B cell (primary cell): ENCODE measurements at regions of chr1 and their contacts with region 1.

Region 1: DNA sequence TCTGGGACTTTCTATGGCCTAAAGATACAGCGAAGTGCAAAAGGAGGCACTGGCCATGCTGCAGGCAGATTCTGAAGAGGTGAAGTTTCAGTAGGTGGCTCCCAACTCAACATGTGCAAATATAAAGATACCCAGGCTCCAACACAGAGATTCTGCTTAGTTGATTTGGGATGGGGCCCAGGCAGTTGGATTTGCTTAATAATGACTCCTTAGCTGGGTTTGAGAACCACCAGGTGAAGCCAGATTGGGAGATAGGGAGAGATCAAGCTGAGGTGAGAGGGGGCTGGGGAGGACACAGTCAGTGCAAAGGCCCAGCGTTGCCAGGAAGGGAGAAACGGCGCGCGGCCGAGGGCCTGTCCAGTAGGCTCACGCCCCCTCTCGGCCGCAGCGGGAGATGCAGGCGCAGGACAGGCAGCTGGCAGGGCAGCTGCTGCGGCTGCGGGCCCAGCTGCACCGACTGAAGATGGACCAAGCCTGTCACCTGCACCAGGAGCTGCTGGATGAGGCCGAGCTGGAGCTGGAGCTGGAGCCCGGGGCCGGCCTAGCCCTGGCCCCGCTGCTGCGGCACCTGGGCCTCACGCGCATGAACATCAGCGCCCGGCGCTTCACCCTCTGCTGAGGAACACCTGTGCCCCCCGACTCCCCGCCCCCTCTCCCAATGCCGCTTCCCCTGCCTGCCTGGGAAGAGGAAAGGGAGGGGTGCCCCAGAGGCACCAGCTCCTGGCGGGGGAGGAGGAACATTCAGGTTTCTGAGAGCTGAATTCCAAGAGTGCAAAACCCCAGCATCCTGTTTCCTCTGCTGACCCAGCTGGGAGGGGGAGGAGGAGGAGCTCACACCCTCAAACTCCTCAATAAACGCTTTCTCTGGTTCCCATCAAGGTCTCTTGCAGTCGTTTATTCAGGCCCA is 1.2 kb downstream of the FAM167B start:
- DNase-seq: peak; percentile 77
- ATAC-seq: peak; percentile 11
- H3K4me3 ChIP-seq: peak overlapping the region in 3 of 5 experiments; percentile 7 to 56 (median 29)
- H3K4me3 Mint-ChIP-seq: peak overlapping the region; percentile 68
- H3K27ac ChIP-seq: peak overlapping the region; percentile 94 to 95
- H3K27ac Mint-ChIP-seq: peak overlapping the region; percentile 84
- H3K4me1 ChIP-seq: peaks cover 72 to 73% of the 10 kb centered on the region in 2 donors
- H3K4me1 Mint-ChIP-seq: peaks cover 64% of the 10 kb centered on the region
- H3K27me3 ChIP-seq: no peaks in the 10 kb centered on the region
- H3K27me3 Mint-ChIP-seq: no peaks in the 10 kb centered on the region
- CTCF ChIP-seq: peak; percentile 90

Region 2: DNA sequence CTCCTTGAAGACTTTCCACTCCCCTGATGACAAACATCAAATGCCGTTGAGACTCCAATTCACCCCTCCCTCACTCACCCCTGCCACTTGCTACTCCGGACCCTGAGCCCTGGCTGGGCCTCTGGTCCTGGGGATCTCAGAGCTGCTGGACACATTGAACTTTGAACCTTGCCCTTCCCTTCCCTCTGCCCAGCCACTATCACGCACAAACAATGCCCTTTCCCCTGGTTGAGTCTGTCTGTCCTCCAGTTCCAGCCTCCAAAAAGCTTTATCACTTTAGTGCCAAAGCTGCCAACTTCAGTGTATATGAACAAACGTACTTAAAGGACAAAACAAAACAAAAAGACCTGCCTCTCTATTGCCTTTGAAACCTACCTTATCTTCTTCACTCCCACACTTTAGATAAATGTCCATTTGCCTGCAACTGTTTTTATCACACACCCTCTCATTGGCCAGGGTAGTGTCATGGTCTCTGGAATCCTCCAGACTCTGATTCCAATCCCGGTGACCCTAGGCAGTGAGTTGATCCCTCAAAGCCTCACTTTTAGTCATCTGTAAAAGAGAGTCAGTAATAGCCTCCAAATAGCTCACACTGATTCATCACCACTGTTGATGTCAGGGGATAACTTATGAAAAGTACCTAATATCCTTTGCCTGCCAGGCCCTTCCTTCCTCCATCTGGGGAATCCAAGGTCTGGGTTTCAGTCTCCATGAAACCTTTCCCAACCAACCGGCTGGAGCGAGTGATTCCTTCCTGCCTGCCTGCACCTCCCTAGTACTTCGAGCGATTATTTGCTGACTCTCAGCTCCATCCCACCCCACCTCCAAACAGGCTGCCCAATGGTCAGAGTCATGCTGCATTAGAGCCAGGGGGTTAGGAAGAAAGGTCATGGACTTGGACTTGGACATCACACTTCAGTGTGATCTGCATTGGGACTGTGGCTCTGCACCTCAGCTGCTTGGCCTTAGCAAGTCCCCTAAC is 416.5 kb before region 1 on chr1:
- CTCF ChIA-PET with region 1: no interaction called
- POLR2A ChIA-PET with region 1: no interaction called
- intact Hi-C with region 1: no loop called
- DNase-seq: no peak
- ATAC-seq: no peak
- H3K4me3 ChIP-seq: no peak overlapping the region
- H3K4me3 Mint-ChIP-seq: no peak overlapping the region
- H3K27ac ChIP-seq: no peak overlapping the region
- H3K27ac Mint-ChIP-seq: no peak overlapping the region
- H3K4me1 ChIP-seq: peaks cover 16 to 22% of the 10 kb centered on the region in 2 donors
- H3K4me1 Mint-ChIP-seq: peaks cover 16% of the 10 kb centered on the region
- H3K27me3 ChIP-seq: no peaks in the 10 kb centered on the region
- H3K27me3 Mint-ChIP-seq: no peaks in the 10 kb centered on the region
- CTCF ChIP-seq: no peak

Region 3: GRCh38 chr1:32179443-32180185 is 68.6 kb before region 1 on chr1 and contains the start of gene TXLNA:
- CTCF ChIA-PET with region 1: interaction called, 6 read pairs
- POLR2A ChIA-PET with region 1: interaction called, 3 read pairs
- intact Hi-C with region 1: loop called (anchors 2 kb)
- DNase-seq: peak; percentile 94
- ATAC-seq: peak; percentile 90
- H3K4me3 ChIP-seq: peak within 1 kb of the TSS; percentile 71 to 92 (median 76)
- H3K4me3 Mint-ChIP-seq: peak within 1 kb of the TSS; percentile 96
- H3K27ac ChIP-seq: peak within 1 kb of the TSS; percentile 76 to 90
- H3K27ac Mint-ChIP-seq: peak within 1 kb of the TSS; percentile 99
- H3K4me1 ChIP-seq: peaks cover 21 to 31% of the 10 kb centered on the region in 2 donors
- H3K4me1 Mint-ChIP-seq: peaks cover 35% of the 10 kb centered on the region
- H3K27me3 ChIP-seq: no peaks in the 10 kb centered on the region
- H3K27me3 Mint-ChIP-seq: no peaks in the 10 kb centered on the region
- CTCF ChIP-seq: no peak
- total RNA-seq, gene TXLNA: 38.3 and 38.4 TPM in 2 replicates

Region 4: GRCh38 chr1:32266921-32267591 is 18.8 kb after region 1 on chr1:
- CTCF ChIA-PET with region 1: interaction called, 44 read pairs
- POLR2A ChIA-PET with region 1: interaction called, 5 read pairs
- intact Hi-C with region 1: loop called (anchors 2 kb)
- DNase-seq: no peak
- ATAC-seq: no peak
- H3K4me3 ChIP-seq: no peak overlapping the region
- H3K4me3 Mint-ChIP-seq: no peak overlapping the region
- H3K27ac ChIP-seq: no peak overlapping the region
- H3K27ac Mint-ChIP-seq: peak overlapping the region; percentile 74
- H3K4me1 ChIP-seq: peaks cover 22 to 28% of the 10 kb centered on the region in 2 donors
- H3K4me1 Mint-ChIP-seq: peaks cover 27% of the 10 kb centered on the region
- H3K27me3 ChIP-seq: no peaks in the 10 kb centered on the region
- H3K27me3 Mint-ChIP-seq: no peaks in the 10 kb centered on the region
- CTCF ChIP-seq: no peak

Region 5: DNA sequence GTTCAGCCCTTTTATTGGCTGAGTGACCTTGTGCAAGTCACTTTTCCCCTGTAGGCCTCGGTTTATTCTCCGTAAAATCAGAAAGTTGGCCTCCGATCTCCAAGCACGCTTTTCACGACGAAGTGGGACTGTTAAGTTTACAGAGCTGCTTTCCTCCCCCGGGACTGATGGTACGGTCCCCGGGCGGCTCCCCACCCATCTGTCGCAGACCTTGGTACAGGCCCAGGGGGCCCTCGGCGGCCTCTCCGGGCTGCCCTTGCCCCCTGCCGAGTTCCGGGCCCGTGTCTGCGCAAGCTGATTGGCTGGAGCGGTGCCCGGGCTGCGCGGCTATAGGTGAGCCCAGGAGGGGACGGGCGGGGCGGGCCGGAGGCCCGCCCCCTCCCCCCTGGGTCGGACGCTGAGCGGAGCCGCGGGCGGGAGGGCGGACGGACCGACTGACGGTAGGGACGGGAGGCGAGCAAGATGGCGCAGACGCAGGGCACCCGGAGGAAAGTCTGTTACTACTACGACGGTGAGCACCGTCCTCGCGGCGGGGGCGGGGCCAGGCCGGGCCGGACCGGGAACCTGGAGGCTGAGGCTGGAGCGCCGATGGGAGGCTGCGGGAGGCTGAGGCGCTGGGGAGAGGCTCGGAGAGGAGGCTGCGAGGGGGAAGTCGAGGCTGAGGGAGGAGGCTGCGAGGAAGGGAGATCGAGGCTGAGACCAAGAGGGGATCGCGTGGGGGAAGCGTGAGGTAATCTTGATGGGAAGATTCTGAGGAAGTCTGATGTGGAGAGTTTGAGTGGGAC is 43.7 kb after region 1 on chr1 and contains the start of gene HDAC1:
- CTCF ChIA-PET with region 1: interaction called, 55 read pairs
- POLR2A ChIA-PET with region 1: interaction called, 34 read pairs
- intact Hi-C with region 1: loop called (anchors 1 kb)
- DNase-seq: peak; percentile 96
- ATAC-seq: peak; percentile 98
- H3K4me3 ChIP-seq: peak within 1 kb of the TSS; percentile 77 to 98 (median 88)
- H3K4me3 Mint-ChIP-seq: peak within 1 kb of the TSS; percentile 100
- H3K27ac ChIP-seq: peak within 1 kb of the TSS; percentile 81 to 87
- H3K27ac Mint-ChIP-seq: peak within 1 kb of the TSS; percentile 99
- H3K4me1 ChIP-seq: peaks cover 41 to 42% of the 10 kb centered on the region in 2 donors
- H3K4me1 Mint-ChIP-seq: peaks cover 39% of the 10 kb centered on the region
- H3K27me3 ChIP-seq: no peaks in the 10 kb centered on the region
- H3K27me3 Mint-ChIP-seq: no peaks in the 10 kb centered on the region
- CTCF ChIP-seq: peak; percentile 1
- total RNA-seq, gene HDAC1: 200 and 205 TPM in 2 replicates

Region 6: GRCh38 chr1:32307323-32307722 is 59.1 kb after region 1 on chr1:
- CTCF ChIA-PET with region 1: interaction called, 17 read pairs
- POLR2A ChIA-PET with region 1: interaction called, 5 read pairs
- intact Hi-C with region 1: no loop called
- DNase-seq: no peak
- ATAC-seq: no peak
- H3K4me3 ChIP-seq: no peak overlapping the region
- H3K4me3 Mint-ChIP-seq: peak overlapping the region; percentile 0
- H3K27ac ChIP-seq: peak overlapping the region; percentile 24 to 72
- H3K27ac Mint-ChIP-seq: peak overlapping the region; percentile 78
- H3K4me1 ChIP-seq: peaks cover 42 to 44% of the 10 kb centered on the region in 2 donors
- H3K4me1 Mint-ChIP-seq: peaks cover 57% of the 10 kb centered on the region
- H3K27me3 ChIP-seq: no peaks in the 10 kb centered on the region
- H3K27me3 Mint-ChIP-seq: no peaks in the 10 kb centered on the region
- CTCF ChIP-seq: no peak

Region 7: DNA sequence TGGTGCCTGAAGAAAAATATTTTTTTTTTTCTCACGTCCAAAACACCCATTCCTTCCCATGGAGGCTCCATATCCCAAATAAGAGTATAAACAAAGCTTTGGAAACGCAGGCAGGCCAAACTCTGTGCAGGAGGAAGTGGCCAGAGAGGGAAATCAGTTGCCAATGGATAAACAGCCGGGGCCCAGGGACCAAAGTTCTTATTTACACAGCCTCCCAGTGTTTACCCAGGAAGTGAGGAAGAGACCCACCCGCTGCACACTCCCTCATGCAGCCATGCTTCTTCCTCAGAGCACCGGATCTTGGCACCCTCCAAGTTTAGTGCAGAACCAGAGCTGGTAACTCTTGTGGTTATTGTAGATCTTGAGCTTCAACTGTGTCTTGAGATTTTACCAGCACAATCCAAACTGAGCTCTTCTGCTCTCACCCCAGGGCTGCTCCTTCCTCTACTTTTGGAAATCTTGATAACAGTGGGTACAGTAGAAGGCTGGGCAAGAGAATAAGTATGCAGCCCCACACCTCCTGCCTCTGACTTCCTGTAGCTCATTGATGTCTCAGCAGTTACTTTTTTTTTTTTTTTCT is 73.6 kb after region 1 on chr1:
- CTCF ChIA-PET with region 1: interaction called, 118 read pairs
- POLR2A ChIA-PET with region 1: interaction called, 10 read pairs
- intact Hi-C with region 1: loop called (anchors 2 kb)
- DNase-seq: no peak
- ATAC-seq: peak; percentile 35
- H3K4me3 ChIP-seq: peak overlapping the region in 3 of 5 experiments; percentile 5 to 34 (median 12)
- H3K4me3 Mint-ChIP-seq: peak overlapping the region; percentile 80
- H3K27ac ChIP-seq: peak overlapping the region; percentile 59 to 63
- H3K27ac Mint-ChIP-seq: peak overlapping the region; percentile 89
- H3K4me1 ChIP-seq: peaks cover 70 to 78% of the 10 kb centered on the region in 2 donors
- H3K4me1 Mint-ChIP-seq: peaks cover 57% of the 10 kb centered on the region
- H3K27me3 ChIP-seq: no peaks in the 10 kb centered on the region
- H3K27me3 Mint-ChIP-seq: no peaks in the 10 kb centered on the region
- CTCF ChIP-seq: no peak

Region 8: GRCh38 chr1:32361674-32362473 is 113.6 kb after region 1 on chr1:
- CTCF ChIA-PET with region 1: no interaction called
- POLR2A ChIA-PET with region 1: no interaction called
- intact Hi-C with region 1: no loop called
- DNase-seq: peak; percentile 65
- ATAC-seq: peak; percentile 46
- H3K4me3 ChIP-seq: peak overlapping the region in 3 of 5 experiments; percentile 51 to 54 (median 54)
- H3K4me3 Mint-ChIP-seq: peak overlapping the region; percentile 78
- H3K27ac ChIP-seq: no peak overlapping the region
- H3K27ac Mint-ChIP-seq: no peak overlapping the region
- H3K4me1 ChIP-seq: peaks cover 22 to 35% of the 10 kb centered on the region in 2 donors
- H3K4me1 Mint-ChIP-seq: peaks cover 29% of the 10 kb centered on the region
- H3K27me3 ChIP-seq: no peaks in the 10 kb centered on the region
- H3K27me3 Mint-ChIP-seq: no peaks in the 10 kb centered on the region
- CTCF ChIP-seq: no peak